IMR-90 (cell line): ENCODE measurements at regions of chr21 and their contacts with region 1.

Region 1: DNA sequence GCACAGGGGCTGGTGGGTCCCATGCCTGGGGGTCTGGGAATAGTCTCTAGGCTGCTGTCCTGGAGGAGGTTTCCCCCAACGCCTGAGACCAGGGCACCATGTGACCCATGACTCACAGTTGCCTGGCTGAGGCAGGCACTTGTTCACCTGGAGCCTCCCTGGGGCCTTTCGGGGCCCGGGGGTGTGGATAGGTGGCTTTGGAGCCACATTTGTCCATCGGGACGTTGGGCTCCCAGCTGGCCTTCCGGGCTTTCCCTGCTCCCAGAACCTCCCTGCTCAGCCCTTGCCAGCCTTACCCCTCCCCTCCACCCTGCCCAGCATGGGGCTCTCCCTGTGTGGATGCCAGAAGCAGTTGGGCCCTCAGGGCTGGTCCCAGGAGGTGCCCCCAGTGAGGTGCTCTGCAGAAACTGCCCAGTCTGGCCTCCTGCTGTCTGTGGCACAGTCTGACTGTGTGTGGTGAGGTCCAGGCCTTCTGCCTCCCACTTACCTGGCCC is 14.2 kb downstream of the COL6A1 start:
- DNase-seq: no peak
- ATAC-seq: no peak; the same call in 1 of the 2 replicates
- H3K4me3 ChIP-seq: no peak overlapping the region
- H3K27ac ChIP-seq: peak overlapping the region; percentile 60
- H3K4me1 ChIP-seq: 0 out of 2 replicates have a peak, but pooled peaks cover 1% of the 10 kb centered on the region
- H3K27me3 ChIP-seq: no peaks in the 10 kb centered on the region
- CTCF ChIP-seq: no peak
- POLR2A ChIP-seq: no peak; the same call in none of the 2 replicates
- RAD21 ChIP-seq: no peak

Region 2: GRCh38 chr21:46097336-46098293 is 101.9 kb after region 1 on chr21 and contains the start of gene COL6A2:
- CTCF ChIA-PET with region 1: no interaction called
- POLR2A ChIA-PET with region 1: no interaction called
- dilution Hi-C with region 1: no loop called
- in situ Hi-C with region 1: no loop called
- intact Hi-C with region 1: loop called (anchors 5 kb)
- DNase-seq: peak; percentile 71
- ATAC-seq: peak; percentile 88
- H3K4me3 ChIP-seq: peak within 1 kb of the TSS; percentile 97
- H3K27ac ChIP-seq: peak within 1 kb of the TSS; percentile 98
- H3K4me1 ChIP-seq: peaks cover 23% of the 10 kb centered on the region
- H3K27me3 ChIP-seq: no peaks in the 10 kb centered on the region
- CTCF ChIP-seq: peak; percentile 42
- POLR2A ChIP-seq: peak; percentile 94
- RAD21 ChIP-seq: peak; percentile 45
- total RNA-seq, gene COL6A2: 208 and 222 TPM in 2 replicates